Heart left ventricle (tissue), 16 donors: ENCODE measurements at regions of chr12 and their contacts with region 1.

Region 1: GRCh38 chr12:55631733-55632132 is 5.0 kb upstream of the OR10P1 start:
- DNase-seq: peak in 1 of 5 donors; percentile 35
- ATAC-seq: peak in 3 of 4 donors; percentile 12 to 41 (median 23)
- H3K4me3 ChIP-seq: no peak overlapping the region
- H3K27ac ChIP-seq: peak overlapping the region in 5 of 12 donors; percentile 21 to 57 (median 38)
- H3K4me1 ChIP-seq: peaks cover 0 to 33% (median 3%) of the 10 kb centered on the region in 12 donors
- H3K27me3 ChIP-seq: no peaks in the 10 kb centered on the region
- CTCF ChIP-seq: no peak
- POLR2A ChIP-seq: no peak

Region 2: DNA sequence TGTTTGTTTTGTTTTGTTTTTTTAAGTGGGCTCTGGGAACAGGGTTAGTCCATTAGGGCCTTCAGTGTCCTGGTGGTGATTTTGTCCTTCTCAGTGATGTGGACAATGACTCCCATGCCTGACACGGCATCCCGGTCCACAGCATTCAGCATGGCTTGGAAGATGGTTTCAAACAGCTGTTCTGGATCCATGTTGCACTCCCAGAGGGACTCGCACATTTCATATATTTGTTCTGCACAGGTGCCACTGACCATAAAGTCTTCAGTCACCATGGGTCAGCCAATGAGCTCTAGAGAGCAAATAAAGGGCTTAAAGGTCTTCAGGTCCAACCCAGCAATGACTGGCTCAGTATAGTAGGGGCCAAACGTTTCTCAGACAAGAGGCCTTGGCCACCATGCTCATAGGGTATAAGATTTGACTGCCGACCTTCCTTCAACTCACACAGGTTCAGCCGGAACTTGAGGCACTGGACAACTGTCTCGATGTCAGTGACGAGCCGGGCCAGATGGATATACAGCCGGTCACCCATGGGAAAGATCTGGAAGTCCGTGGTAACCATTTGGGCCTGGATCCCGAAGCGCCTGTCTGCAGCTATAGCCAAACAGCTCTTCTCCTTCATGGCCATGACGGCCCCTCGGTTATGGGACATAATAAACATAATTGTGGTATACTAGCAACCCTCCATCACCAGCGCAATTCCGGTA is 22.9 kb after region 1 on chr12:
- intact Hi-C with region 1: loop called in 1 of 10 experiments (anchors 2 kb)
- DNase-seq: no peak
- ATAC-seq: no peak
- H3K4me3 ChIP-seq: no peak overlapping the region
- H3K27ac ChIP-seq: no peak overlapping the region
- H3K4me1 ChIP-seq: peaks cover 0 to 20% (median 8%) of the 10 kb centered on the region in 12 donors
- H3K27me3 ChIP-seq: no peaks in the 10 kb centered on the region
- CTCF ChIP-seq: no peak
- POLR2A ChIP-seq: no peak